MCF 10A (cell line): ENCODE measurements at regions of chr7 and their contacts with region 1.

Region 1: GRCh38 chr7:36583318-36583717 is 141.0 kb downstream of the AOAH start:
- DNase-seq: peak; percentile 30
- H3K4me3 Mint-ChIP-seq: no peak overlapping the region
- H3K27ac Mint-ChIP-seq: peak overlapping the region; percentile 87
- H3K4me1 Mint-ChIP-seq: peaks cover 19% of the 10 kb centered on the region
- H3K27me3 Mint-ChIP-seq: no peaks in the 10 kb centered on the region
- CTCF ChIP-seq: no peak

Region 2: GRCh38 chr7:36506820-36507219 is 76.5 kb before region 1 on chr7:
- CTCF ChIA-PET with region 1: no interaction called
- POLR2A ChIA-PET with region 1: no interaction called
- intact Hi-C with region 1: loop called (anchors 2 kb)
- DNase-seq: peak; percentile 68
- H3K4me3 Mint-ChIP-seq: no peak overlapping the region
- H3K27ac Mint-ChIP-seq: no peak overlapping the region
- H3K4me1 Mint-ChIP-seq: peaks cover 6% of the 10 kb centered on the region
- H3K27me3 Mint-ChIP-seq: no peaks in the 10 kb centered on the region
- CTCF ChIP-seq: no peak

Region 3: DNA sequence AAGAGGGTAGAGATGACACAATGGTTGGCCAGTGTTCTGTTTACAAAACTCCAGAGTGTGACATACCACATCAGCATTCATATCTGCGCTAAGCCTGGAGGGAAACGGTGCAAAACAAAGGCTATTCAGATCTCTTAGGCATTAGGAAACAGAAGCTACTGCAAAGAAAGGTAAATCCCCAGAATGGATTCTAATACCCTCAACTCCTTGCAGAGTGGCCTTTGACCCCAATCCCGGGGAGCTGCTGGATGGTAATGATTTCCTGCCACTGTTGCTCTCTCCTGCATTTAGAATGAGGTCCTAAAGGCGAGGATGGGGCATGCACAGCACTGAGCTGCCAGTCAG is 75.8 kb after region 1 on chr7:
- CTCF ChIA-PET with region 1: no interaction called
- POLR2A ChIA-PET with region 1: interaction called, 6 read pairs
- intact Hi-C with region 1: loop called (anchors 5 kb)
- DNase-seq: peak; percentile 88
- H3K4me3 Mint-ChIP-seq: peak overlapping the region; percentile 36
- H3K27ac Mint-ChIP-seq: peak overlapping the region; percentile 86
- H3K4me1 Mint-ChIP-seq: peaks cover 23% of the 10 kb centered on the region
- H3K27me3 Mint-ChIP-seq: no peaks in the 10 kb centered on the region
- CTCF ChIP-seq: no peak

Region 4: DNA sequence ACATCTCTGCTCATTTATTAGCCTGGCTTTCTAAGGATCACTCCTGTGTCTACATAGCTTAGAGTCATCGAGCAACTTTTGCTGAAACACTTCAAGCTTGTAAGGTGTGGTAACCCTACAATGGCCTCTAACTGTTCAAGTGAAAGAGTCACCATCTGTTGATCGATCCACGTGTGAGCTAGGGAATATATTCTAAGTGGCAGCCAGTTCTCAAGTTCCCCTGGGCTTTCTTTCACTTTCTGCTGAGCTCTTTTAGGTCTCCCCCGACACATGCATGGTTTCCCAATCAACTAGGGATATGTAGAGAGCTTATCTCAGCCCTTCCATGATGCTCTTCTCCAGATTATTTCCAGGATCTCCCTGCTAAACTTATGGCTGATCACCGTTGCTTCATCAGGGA is 125.4 kb after region 1 on chr7:
- CTCF ChIA-PET with region 1: no interaction called
- POLR2A ChIA-PET with region 1: no interaction called
- intact Hi-C with region 1: no loop called
- DNase-seq: no peak
- H3K4me3 Mint-ChIP-seq: no peak overlapping the region
- H3K27ac Mint-ChIP-seq: no peak overlapping the region
- H3K4me1 Mint-ChIP-seq: no peaks in the 10 kb centered on the region
- H3K27me3 Mint-ChIP-seq: no peaks in the 10 kb centered on the region
- CTCF ChIP-seq: no peak

Region 5: DNA sequence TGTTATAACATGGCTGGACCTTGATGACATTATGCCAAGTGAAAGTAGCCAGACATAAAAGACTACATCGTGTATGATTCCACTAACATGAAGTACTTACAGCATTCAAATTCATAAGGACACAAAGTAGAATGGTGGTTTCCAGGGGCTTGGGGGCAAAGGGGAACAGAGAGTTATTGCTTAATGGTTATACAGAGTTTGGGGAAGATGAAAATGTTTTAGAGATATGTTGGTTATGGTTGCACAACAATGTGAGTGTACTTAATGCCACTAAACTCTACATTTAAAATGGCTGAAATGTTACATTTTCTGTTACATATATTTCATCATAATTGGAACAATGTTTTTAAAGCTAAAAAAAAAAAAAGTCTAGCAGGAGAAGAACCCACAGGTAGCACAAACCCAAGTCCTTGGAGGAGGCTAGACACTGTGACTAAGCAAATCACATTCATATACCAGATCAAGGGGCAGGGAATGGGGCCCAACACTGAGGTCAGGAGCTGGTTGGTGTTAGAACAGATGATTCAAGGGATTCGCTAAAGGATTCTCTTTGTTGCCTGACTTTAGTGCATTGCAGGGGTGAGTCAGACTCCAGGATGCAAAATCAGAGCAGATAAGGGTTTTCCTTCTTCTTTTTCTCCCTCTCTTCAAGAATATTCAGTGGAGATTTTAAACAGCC is 166.1 kb after region 1 on chr7:
- CTCF ChIA-PET with region 1: no interaction called
- POLR2A ChIA-PET with region 1: no interaction called
- intact Hi-C with region 1: no loop called
- DNase-seq: peak; percentile 33
- H3K4me3 Mint-ChIP-seq: no peak overlapping the region
- H3K27ac Mint-ChIP-seq: peak overlapping the region; percentile 72
- H3K4me1 Mint-ChIP-seq: peaks cover 30% of the 10 kb centered on the region
- H3K27me3 Mint-ChIP-seq: no peaks in the 10 kb centered on the region
- CTCF ChIP-seq: no peak

Region 6: GRCh38 chr7:36949711-36950600 is 366.6 kb after region 1 on chr7:
- CTCF ChIA-PET with region 1: no interaction called
- POLR2A ChIA-PET with region 1: no interaction called
- intact Hi-C with region 1: no loop called
- DNase-seq: peak; percentile 53
- H3K4me3 Mint-ChIP-seq: no peak overlapping the region
- H3K27ac Mint-ChIP-seq: no peak overlapping the region
- H3K4me1 Mint-ChIP-seq: peaks cover 9% of the 10 kb centered on the region
- H3K27me3 Mint-ChIP-seq: no peaks in the 10 kb centered on the region
- CTCF ChIP-seq: no peak